ENCODE measurements at regions of chr2 and their contacts with region 1.

Region 1: DNA sequence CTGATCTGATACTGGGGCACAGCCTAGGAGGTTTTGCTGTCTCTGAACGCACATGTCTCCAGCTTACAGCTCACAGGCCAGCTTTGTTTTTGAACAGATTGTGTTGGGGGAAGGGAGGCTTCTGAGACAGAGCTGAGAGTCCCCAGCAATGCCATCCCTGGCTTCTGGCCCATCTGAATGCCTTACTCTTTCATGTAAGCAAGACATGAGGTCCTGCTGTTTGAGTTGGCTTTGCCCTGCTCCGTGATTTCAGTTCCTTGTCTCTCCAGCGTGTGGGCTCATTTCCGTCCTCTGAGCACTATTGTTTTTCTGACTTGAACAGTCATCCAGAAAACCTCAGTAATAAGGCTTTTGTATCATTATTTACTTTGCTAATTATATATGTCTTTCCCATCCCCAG is 194.9 kb upstream of the TNP1 start:
- DNase-seq: no peak
- H3K4me3 ChIP-seq: no peak overlapping the region
- H3K27ac ChIP-seq: no peak overlapping the region
- H3K4me1 ChIP-seq: peaks cover 15% of the 10 kb centered on the region
- H3K27me3 ChIP-seq: no peaks in the 10 kb centered on the region
- CTCF ChIP-seq: no peak
- EP300 ChIP-seq: no peak
- POLR2A ChIP-seq: no peak

Region 2: DNA sequence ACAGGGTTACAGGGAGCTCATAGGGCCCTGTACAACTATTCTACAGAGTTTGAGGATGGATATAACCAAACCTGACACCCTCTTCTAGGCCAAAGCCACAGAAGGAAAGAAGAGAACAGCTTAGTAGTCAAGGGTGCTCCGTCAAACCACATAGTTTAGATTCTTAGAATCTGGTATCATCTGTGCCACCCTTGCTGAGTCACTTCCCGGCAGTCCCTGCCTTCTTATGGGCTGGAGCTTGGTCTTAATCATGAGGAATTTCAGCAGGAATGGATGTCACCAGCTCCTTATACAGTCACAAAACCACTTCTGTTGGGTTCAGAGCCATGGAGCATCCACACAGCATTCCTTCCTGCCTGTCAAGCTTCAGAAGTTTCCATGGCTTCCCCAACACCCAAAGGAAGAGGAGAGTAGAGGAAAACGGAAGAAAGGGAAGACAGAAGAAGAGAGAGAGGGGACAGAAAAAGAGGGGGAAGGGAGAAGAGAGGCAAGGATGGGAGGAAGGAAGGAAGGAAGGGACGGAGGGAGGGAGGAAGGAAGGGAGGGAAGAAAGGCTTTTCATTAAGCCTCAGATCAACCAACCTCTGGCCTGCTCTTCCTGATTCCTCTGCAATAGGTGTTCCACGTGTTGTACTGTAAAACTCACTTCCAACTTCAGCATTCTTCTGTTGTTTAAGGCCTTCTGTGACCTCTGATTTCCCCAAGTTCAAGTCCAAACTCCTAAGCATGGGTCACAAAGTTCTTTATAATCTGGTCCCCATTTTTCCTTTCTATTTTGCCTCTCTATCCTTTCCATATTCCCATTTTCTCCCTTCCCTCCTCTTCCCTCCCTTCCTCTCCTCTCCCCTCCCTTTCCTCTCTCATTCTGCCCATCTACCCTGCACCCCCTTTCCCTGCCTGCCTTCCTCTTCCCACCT is 51.2 kb after region 1 on chr2:
- intact Hi-C with region 1: no loop called
- DNase-seq: no peak
- H3K4me3 ChIP-seq: no peak overlapping the region
- H3K27ac ChIP-seq: no peak overlapping the region
- H3K4me1 ChIP-seq: no peaks in the 10 kb centered on the region
- H3K27me3 ChIP-seq: no peaks in the 10 kb centered on the region
- CTCF ChIP-seq: no peak
- EP300 ChIP-seq: no peak
- POLR2A ChIP-seq: no peak

Region 3: GRCh38 chr2:217118559-217119284 is 63.9 kb after region 1 on chr2:
- intact Hi-C with region 1: no loop called
- DNase-seq: no peak
- H3K4me3 ChIP-seq: no peak overlapping the region
- H3K27ac ChIP-seq: no peak overlapping the region
- H3K4me1 ChIP-seq: no peaks in the 10 kb centered on the region
- H3K27me3 ChIP-seq: no peaks in the 10 kb centered on the region
- CTCF ChIP-seq: no peak
- EP300 ChIP-seq: no peak
- POLR2A ChIP-seq: no peak

Region 4: GRCh38 chr2:217193431-217194340 is 138.9 kb after region 1 on chr2:
- intact Hi-C with region 1: no loop called
- DNase-seq: no peak
- H3K4me3 ChIP-seq: no peak overlapping the region
- H3K27ac ChIP-seq: no peak overlapping the region
- H3K4me1 ChIP-seq: no peaks in the 10 kb centered on the region
- H3K27me3 ChIP-seq: no peaks in the 10 kb centered on the region
- CTCF ChIP-seq: no peak
- EP300 ChIP-seq: no peak
- POLR2A ChIP-seq: no peak

Region 5: DNA sequence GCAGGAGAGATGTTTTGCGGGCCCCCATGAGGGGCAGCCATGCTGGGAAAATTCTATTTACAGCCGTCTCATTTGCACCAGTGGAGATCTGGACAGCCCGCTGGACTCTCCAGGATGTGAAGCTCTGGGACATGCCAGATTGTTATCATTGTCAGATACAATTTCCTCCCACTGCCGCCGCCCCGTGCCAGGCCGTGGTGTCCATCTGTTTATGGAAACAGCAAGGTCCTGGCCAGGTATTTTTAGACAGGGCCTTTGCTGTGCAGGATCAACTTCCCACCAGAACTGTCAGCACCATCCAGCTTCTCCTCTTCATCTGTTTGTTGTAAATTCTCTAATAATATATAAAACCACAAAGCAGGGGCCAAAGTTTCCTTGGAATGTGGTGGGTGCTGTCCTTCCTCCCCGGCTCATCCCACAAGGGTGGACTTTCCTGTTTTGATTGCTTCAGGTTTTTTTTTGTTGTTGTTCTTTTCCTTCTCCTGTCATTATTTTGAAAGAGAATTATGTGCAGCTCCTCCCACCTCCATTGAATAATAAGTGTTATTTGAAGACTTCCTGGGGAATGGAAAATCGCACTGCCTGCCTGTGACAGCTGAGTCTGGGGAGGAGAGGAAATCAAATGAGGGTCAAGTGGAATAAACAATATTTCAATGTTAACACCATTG is 549.9 kb after region 1 on chr2:
- intact Hi-C with region 1: loop called in 1 of 4 experiments (anchors 5 kb)
- DNase-seq: no peak
- H3K4me3 ChIP-seq: no peak overlapping the region
- H3K27ac ChIP-seq: no peak overlapping the region
- H3K4me1 ChIP-seq: no peaks in the 10 kb centered on the region
- H3K27me3 ChIP-seq: no peaks in the 10 kb centered on the region
- CTCF ChIP-seq: no peak
- EP300 ChIP-seq: no peak
- POLR2A ChIP-seq: no peak

Measured in ovary (tissue), 10 donors.